Caco-2 (cell line): ENCODE measurements at regions of chr1 and their contacts with region 1.

Region 1: DNA sequence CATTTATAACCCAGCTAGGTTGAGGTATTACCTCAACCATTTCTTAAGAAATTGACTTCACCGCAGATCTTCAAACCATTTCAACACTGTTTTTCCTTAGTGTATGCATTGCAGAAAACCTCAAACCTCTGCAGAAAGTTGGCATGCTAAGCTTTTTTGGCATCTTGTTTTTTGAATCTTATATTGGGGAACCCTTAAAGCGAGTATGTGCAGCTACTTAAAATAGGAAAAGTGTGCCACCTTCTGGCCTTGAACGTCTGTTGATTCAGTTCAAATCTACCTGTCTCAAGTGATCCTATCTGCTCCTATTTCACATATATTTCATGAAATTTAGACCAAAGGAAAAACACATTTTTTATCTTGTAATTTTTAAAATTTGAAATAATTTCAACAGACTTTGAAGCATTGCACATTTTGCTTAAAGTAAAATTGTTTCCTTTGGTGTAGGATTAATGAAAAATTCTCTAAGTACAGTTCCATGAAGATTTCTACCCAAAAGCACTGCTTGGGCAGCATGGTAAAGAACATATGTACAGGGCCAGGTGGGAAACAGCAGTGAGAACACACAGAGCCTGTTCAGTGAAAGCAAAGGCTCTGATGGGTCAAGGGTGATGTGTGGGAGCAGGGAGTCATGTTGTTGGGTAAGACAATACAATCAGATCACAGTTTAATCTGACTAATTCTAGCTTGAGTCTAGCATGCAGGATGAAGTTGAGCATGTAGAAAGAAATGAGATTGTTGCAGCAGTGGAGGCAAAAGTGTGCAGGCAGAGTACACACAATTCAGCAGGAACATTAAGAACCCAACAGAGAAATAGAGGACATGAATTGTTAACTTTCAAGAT is 17.2 kb downstream of the HENMT1 start:
- DNase-seq: peak in 1 of 2 experiments; percentile 40
- H3K4me3 ChIP-seq: no peak overlapping the region
- H3K4me3 Mint-ChIP-seq: no peak overlapping the region
- H3K27ac Mint-ChIP-seq: no peak overlapping the region
- H3K4me1 ChIP-seq: peaks cover 11% of the 10 kb centered on the region
- H3K4me1 Mint-ChIP-seq: peaks cover 18% of the 10 kb centered on the region
- H3K27me3 ChIP-seq: no peaks in the 10 kb centered on the region
- H3K27me3 Mint-ChIP-seq: no peaks in the 10 kb centered on the region
- CTCF ChIP-seq: peak; percentile 47 to 51

Region 2: GRCh38 chr1:108512239-108512981 is 131.3 kb before region 1 on chr1:
- CTCF ChIA-PET with region 1: interaction called, 4 read pairs
- POLR2A ChIA-PET with region 1: no interaction called
- intact Hi-C with region 1: loop called (anchors 1 kb)
- DNase-seq: no peak
- H3K4me3 ChIP-seq: no peak overlapping the region
- H3K4me3 Mint-ChIP-seq: no peak overlapping the region
- H3K27ac Mint-ChIP-seq: no peak overlapping the region
- H3K4me1 ChIP-seq: no peaks in the 10 kb centered on the region
- H3K4me1 Mint-ChIP-seq: no peaks in the 10 kb centered on the region
- H3K27me3 ChIP-seq: no peaks in the 10 kb centered on the region
- H3K27me3 Mint-ChIP-seq: peaks cover 5% of the 10 kb centered on the region
- CTCF ChIP-seq: peak; percentile 52 to 65

Region 3: GRCh38 chr1:108559215-108560186 is 84.2 kb before region 1 on chr1 and contains the start of gene EEIG2:
- CTCF ChIA-PET with region 1: interaction called, 3 read pairs
- POLR2A ChIA-PET with region 1: no interaction called
- intact Hi-C with region 1: loop called (anchors 2 kb)
- DNase-seq: peak; percentile 73 to 89
- H3K4me3 ChIP-seq: peak within 1 kb of the TSS; percentile 48
- H3K4me3 Mint-ChIP-seq: peak within 1 kb of the TSS; percentile 85
- H3K27ac Mint-ChIP-seq: no peak within 1 kb of the TSS
- H3K4me1 ChIP-seq: peaks cover 4% of the 10 kb centered on the region; the same call in 1 of the 2 replicates
- H3K4me1 Mint-ChIP-seq: peaks cover 11% of the 10 kb centered on the region
- H3K27me3 ChIP-seq: no peaks in the 10 kb centered on the region
- H3K27me3 Mint-ChIP-seq: no peaks in the 10 kb centered on the region
- CTCF ChIP-seq: peak in 1 of 2 experiments; percentile 51
- total RNA-seq, gene EEIG2: 2.8 and 3.1 TPM in 2 replicates

Region 4: DNA sequence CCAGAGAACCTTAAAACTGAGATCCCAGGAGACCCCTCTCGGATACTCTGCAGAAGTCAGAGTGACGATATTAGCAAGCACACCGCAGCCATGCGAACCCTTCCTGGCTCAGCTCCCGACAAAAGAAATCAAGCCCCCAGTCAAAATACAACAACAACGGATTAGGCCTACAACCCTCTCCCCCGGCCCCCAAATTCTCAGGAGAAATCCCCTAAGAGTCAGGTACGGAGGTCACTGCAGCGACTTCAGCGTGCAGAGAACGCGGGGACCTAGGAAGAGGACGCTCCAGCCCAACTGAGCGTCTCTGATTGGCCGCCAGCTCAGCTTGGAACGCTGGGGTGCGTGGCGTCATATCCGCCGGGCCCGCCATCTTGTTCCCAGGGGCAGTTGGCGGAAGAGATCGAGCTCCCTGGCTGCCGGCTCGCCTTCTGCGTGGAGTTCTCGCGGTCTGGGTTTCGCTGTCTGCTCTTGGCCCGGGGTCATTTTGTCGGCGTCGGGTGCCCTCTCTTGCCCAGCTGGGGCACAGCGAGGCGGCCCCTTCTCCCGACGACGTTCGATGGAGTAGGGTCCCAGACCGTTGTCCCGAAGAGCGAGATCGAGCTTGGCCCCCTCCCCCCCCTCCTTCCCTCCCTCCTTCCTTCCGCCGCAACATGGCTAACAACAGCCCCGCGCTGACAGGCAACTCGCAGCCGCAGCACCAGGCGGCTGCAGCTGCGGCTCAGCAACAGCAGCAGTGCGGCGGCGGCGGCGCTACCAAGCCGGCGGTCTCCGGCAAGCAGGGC is 48.4 kb after region 1 on chr1 and contains the start of gene PRPF38B:
- CTCF ChIA-PET with region 1: no interaction called
- POLR2A ChIA-PET with region 1: interaction called, 10 read pairs
- intact Hi-C with region 1: no loop called
- DNase-seq: peak; percentile 88 to 90
- H3K4me3 ChIP-seq: peak within 1 kb of the TSS; percentile 56
- H3K4me3 Mint-ChIP-seq: peak within 1 kb of the TSS; percentile 99
- H3K27ac Mint-ChIP-seq: peak within 1 kb of the TSS; percentile 65
- H3K4me1 ChIP-seq: peaks cover 9% of the 10 kb centered on the region; the same call in 1 of the 2 replicates
- H3K4me1 Mint-ChIP-seq: peaks cover 7% of the 10 kb centered on the region
- H3K27me3 ChIP-seq: no peaks in the 10 kb centered on the region
- H3K27me3 Mint-ChIP-seq: no peaks in the 10 kb centered on the region
- CTCF ChIP-seq: no peak
- total RNA-seq, gene PRPF38B: 37.7 and 37.8 TPM in 2 replicates

Region 5: DNA sequence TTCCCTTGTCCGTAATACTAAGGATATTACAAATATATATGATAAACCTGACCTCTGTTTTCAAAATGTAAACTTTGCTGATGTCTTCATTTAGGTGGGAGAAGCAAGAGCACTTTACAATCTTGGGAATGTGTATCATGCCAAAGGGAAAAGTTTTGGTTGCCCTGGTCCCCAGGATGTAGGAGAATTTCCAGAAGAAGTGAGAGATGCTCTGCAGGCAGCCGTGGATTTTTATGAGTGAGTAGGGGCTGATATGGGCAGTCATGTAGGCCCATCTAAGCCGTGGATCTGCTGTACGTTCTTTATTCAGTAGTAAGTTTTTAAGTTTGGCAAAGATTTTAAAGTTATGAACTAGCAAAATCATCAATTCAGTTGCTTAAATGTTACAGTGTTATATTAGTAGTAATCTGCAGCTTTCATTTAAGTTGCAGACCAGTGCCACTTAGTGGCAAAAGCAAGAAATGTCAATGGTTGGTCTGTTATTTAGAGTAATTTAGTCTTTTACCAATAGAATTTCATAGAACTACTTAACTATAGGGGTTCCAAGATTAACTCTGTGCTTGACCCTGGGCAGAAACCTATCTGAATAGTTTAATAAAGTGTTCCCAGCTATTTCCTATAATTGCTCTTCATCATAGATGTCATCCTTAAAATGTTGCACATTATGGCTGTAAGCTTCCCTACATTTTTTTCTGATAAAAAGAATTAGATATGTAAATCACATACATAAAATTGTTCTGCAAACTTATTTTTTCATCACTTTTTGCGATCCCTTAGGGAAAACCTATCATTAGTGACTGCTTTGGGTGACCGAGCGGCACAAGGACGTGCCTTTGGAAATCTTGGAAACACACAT is 254.4 kb after region 1 on chr1:
- CTCF ChIA-PET with region 1: no interaction called
- POLR2A ChIA-PET with region 1: no interaction called
- intact Hi-C with region 1: loop called (anchors 5 kb)
- DNase-seq: peak in 1 of 2 experiments; percentile 15
- H3K4me3 ChIP-seq: no peak overlapping the region
- H3K4me3 Mint-ChIP-seq: no peak overlapping the region
- H3K27ac Mint-ChIP-seq: no peak overlapping the region
- H3K4me1 ChIP-seq: no peaks in the 10 kb centered on the region; the same call in 1 of the 2 replicates
- H3K4me1 Mint-ChIP-seq: no peaks in the 10 kb centered on the region
- H3K27me3 ChIP-seq: no peaks in the 10 kb centered on the region
- H3K27me3 Mint-ChIP-seq: no peaks in the 10 kb centered on the region
- CTCF ChIP-seq: peak; percentile 28 to 57